ENCODE measurements at regions of chr6 and their contacts with region 1.

Region 1: DNA sequence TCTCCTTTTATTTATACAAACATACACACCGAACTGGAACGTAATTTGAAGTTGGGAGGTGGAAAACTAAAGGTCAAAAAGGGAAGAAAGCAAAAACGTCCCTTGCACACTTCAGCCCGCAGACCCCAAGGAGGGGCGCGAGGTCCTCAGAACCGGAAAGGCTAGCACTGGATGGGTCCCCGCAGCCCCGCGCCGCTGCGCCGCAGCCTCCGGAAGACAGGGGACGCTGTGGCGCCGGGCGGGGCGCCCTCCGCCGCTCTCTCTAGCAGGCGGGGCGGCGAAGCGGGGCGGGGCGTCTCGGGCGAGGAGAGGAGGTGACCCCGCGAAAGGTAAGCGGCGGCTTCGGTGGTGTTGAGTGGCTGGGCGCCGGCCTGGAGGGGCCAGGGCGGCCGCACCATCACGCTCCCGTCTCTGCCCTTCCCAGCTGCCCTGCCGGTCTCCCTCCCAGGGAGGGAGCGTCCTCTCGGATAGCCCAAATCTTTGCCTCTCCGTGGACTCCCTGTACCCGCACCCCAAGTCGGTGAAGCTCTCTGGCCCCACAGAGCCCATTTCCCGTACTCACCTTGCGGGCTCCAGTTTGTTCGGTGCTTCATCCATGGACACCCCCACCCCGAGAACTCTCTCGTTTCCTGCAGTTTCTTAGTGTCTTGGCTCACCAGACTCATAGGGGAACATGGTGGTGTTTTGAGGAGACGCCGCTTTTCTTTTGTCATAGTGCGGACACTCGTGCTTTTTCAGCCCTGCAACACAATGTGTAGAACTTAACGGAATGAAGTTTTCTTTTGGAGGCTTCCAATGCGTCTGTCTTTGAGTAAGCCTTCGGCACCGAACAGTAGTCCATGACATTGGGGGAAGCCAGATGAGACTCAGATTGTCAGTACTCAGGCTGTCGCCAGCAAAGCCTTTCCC is at the start of gene SMIM8:
- DNase-seq: peak; percentile 57 to 97
- H3K4me3 ChIP-seq: peak within 1 kb of the TSS; percentile 86 to 99 (median 96)
- H3K27ac ChIP-seq: peak within 1 kb of the TSS; percentile 81
- H3K4me1 ChIP-seq: peaks cover 0 to 2% (median 0%) of the 10 kb centered on the region in 4 experiments; a peak in 2 of 7 replicates
- H3K27me3 ChIP-seq: no peaks in the 10 kb centered on the region
- CTCF ChIP-seq: peak; percentile 91 to 97 (median 96)
- EP300 ChIP-seq: peak in 1 of 2 experiments; percentile 57; a peak in 1 of 3 replicates
- POLR2A ChIP-seq: peak; percentile 87 to 97
- RAD21 ChIP-seq: peak; percentile 63 to 69
- total RNA-seq, gene SMIM8: 8.6 and 10.7 TPM in 2 replicates

Region 2: GRCh38 chr6:87210979-87211378 is 111.6 kb before region 1 on chr6:
- CTCF ChIA-PET with region 1: no interaction called
- POLR2A ChIA-PET with region 1: no interaction called
- DNase-seq: no peak
- H3K4me3 ChIP-seq: no peak overlapping the region
- H3K27ac ChIP-seq: no peak overlapping the region
- H3K4me1 ChIP-seq: peaks cover 5 to 44% (median 23%) of the 10 kb centered on the region in 4 experiments
- H3K27me3 ChIP-seq: no peaks in the 10 kb centered on the region
- CTCF ChIP-seq: no peak
- EP300 ChIP-seq: no peak
- POLR2A ChIP-seq: no peak
- RAD21 ChIP-seq: no peak

Region 3: GRCh38 chr6:87308970-87309369 is 13.6 kb before region 1 on chr6:
- CTCF ChIA-PET with region 1: interaction called, 23 read pairs
- POLR2A ChIA-PET with region 1: interaction called, 7 read pairs
- DNase-seq: no peak
- H3K4me3 ChIP-seq: no peak overlapping the region
- H3K27ac ChIP-seq: no peak overlapping the region
- H3K4me1 ChIP-seq: no peaks in the 10 kb centered on the region
- H3K27me3 ChIP-seq: no peaks in the 10 kb centered on the region
- CTCF ChIP-seq: no peak
- EP300 ChIP-seq: no peak
- POLR2A ChIP-seq: no peak
- RAD21 ChIP-seq: no peak